ENCODE measurements at regions of chr6 and their contacts with region 1.

Region 1: GRCh38 chr6:157379656-157380454 is 1.1 kb upstream of the ZDHHC14 start:
- DNase-seq: peak; percentile 89
- H3K4me3 ChIP-seq: peak overlapping the region; percentile 84 to 90
- H3K27ac ChIP-seq: peak overlapping the region; percentile 88 to 95
- H3K4me1 ChIP-seq: no peaks in the 10 kb centered on the region
- H3K27me3 ChIP-seq: no peaks in the 10 kb centered on the region
- CTCF ChIP-seq: no peak
- POLR2A ChIP-seq: peak; percentile 18

Region 2: DNA sequence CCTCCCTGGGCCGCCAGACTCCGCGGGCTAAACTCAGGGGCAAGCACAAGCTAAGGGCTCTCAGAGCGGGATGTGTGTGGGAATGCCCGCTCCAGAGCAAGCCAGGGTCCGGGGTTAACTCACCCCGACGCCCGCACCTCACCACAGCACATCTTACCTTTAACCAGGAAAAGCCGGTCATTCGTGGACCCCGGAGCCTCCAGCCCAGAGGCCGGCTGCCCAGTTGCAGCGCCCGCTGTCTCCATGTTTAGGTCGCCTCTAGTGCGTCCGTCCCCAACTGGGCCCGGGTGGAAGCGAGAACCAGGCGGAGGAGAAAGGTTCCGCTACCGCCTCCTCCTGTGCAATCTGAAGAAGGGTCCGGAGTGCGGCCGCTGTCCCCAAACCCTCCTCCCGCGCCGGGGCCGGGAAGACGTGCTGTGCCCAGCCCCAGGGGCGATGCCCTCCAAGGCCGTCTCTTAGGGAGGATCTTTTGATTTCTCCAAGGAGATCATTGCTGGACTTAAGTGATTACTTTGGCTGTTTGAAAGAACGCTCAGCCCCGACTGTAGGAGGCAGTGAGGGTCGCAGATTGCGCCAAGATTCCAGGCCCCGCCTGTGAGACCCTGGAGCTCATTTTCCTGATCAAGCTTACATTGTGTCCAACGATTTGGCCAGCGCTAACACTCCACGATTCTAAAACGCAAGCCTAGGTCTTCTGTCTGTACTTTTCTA is 56.4 kb before region 1 on chr6 and contains the start of gene TMEM242:
- intact Hi-C with region 1: loop called (anchors 5 kb)
- DNase-seq: peak; percentile 84
- H3K4me3 ChIP-seq: peak within 1 kb of the TSS; percentile 73 to 78
- H3K27ac ChIP-seq: peak within 1 kb of the TSS; percentile 83 to 92
- H3K4me1 ChIP-seq: no peaks in the 10 kb centered on the region
- H3K27me3 ChIP-seq: no peaks in the 10 kb centered on the region
- CTCF ChIP-seq: peak in 3 of 4 experiments; percentile 16 to 51 (median 41)
- POLR2A ChIP-seq: peak; percentile 76
- total RNA-seq, gene TMEM242: 6.4 to 8.5 TPM

Region 3: GRCh38 chr6:157449610-157450009 is 69.8 kb after region 1 on chr6:
- intact Hi-C with region 1: loop called (anchors 5 kb)
- DNase-seq: no peak
- H3K4me3 ChIP-seq: no peak overlapping the region
- H3K27ac ChIP-seq: peak overlapping the region; percentile 34 to 63
- H3K4me1 ChIP-seq: no peaks in the 10 kb centered on the region
- H3K27me3 ChIP-seq: no peaks in the 10 kb centered on the region
- CTCF ChIP-seq: no peak
- POLR2A ChIP-seq: no peak

Region 4: GRCh38 chr6:157597446-157598312 is 217.8 kb after region 1 on chr6:
- intact Hi-C with region 1: loop called (anchors 2 kb)
- DNase-seq: peak; percentile 94
- H3K4me3 ChIP-seq: peak overlapping the region in 1 of 2 donors; percentile 5
- H3K27ac ChIP-seq: peak overlapping the region; percentile 76 to 81
- H3K4me1 ChIP-seq: peaks cover 16% of the 10 kb centered on the region
- H3K27me3 ChIP-seq: no peaks in the 10 kb centered on the region
- CTCF ChIP-seq: peak in 3 of 4 experiments; percentile 50 to 67 (median 62)
- POLR2A ChIP-seq: no peak

Region 5: DNA sequence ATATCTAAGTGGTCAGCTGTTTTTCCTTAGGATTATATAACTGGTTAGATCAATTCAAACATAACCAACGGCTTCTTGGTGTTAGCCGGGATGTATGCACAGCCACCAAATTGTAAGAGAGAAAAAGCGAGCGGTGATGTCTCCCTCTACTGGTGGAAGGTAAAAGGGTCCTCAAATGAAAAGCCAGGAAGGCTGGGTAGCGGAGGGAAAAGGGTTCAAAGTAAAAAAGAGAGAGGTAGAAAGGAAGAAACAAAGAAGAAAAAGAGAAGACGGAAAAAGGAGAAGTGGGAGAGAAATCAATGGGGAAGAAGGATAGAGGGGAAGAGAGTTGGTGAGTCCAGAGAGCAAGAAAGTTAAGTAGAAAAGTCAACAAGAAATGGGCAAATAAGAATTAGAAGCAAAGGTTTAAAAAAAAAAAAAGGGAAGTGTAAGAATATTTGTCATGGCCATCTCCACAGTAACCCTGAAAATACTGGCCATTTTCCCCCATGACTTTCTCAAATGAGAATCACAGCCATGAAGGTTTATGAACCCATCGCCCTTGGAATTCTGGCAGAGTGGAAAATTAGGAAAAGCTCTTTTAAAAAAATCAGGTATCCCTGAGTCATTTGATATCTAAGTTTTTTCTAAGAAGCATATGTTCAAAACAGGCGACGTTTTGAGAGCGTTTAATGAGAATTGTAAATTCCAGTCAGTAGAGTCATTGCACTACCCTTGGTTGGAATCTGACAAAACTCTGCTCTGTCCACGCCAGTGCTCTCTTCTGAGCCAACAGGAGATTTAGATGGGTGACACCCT is 287.6 kb after region 1 on chr6:
- intact Hi-C with region 1: loop called (anchors 2 kb)
- DNase-seq: peak; percentile 57
- H3K4me3 ChIP-seq: no peak overlapping the region
- H3K27ac ChIP-seq: no peak overlapping the region
- H3K4me1 ChIP-seq: no peaks in the 10 kb centered on the region
- H3K27me3 ChIP-seq: no peaks in the 10 kb centered on the region
- CTCF ChIP-seq: peak; percentile 72 to 82 (median 81)
- POLR2A ChIP-seq: no peak

Region 6: GRCh38 chr6:157715765-157716164 is 335.9 kb after region 1 on chr6:
- intact Hi-C with region 1: no loop called
- DNase-seq: no peak
- H3K4me3 ChIP-seq: no peak overlapping the region
- H3K27ac ChIP-seq: no peak overlapping the region
- H3K4me1 ChIP-seq: no peaks in the 10 kb centered on the region
- H3K27me3 ChIP-seq: no peaks in the 10 kb centered on the region
- CTCF ChIP-seq: no peak
- POLR2A ChIP-seq: no peak

Region 7: GRCh38 chr6:157823001-157823527 is 443.2 kb after region 1 on chr6 and contains the start of gene SNX9:
- intact Hi-C with region 1: loop called (anchors 5 kb)
- DNase-seq: peak; percentile 74
- H3K4me3 ChIP-seq: peak within 1 kb of the TSS; percentile 69 to 93
- H3K27ac ChIP-seq: peak within 1 kb of the TSS; percentile 95 to 98
- H3K4me1 ChIP-seq: no peaks in the 10 kb centered on the region
- H3K27me3 ChIP-seq: no peaks in the 10 kb centered on the region
- CTCF ChIP-seq: peak in 2 of 4 experiments; percentile 34 to 51
- POLR2A ChIP-seq: peak; percentile 75
- total RNA-seq, gene SNX9: 39.2 to 40.6 TPM

Measured in prostate gland (tissue), 2 donors.